Activated naive CD4-positive, alpha-beta T cell treated with anti-CD3 and anti-CD28 coated beads, Interleukin-2, amount 10 ng/mL, durations not matched to agents 7 days and 5 days (primary cell): ENCODE measurements at regions of chr22 and their contacts with region 1.

Region 1: DNA sequence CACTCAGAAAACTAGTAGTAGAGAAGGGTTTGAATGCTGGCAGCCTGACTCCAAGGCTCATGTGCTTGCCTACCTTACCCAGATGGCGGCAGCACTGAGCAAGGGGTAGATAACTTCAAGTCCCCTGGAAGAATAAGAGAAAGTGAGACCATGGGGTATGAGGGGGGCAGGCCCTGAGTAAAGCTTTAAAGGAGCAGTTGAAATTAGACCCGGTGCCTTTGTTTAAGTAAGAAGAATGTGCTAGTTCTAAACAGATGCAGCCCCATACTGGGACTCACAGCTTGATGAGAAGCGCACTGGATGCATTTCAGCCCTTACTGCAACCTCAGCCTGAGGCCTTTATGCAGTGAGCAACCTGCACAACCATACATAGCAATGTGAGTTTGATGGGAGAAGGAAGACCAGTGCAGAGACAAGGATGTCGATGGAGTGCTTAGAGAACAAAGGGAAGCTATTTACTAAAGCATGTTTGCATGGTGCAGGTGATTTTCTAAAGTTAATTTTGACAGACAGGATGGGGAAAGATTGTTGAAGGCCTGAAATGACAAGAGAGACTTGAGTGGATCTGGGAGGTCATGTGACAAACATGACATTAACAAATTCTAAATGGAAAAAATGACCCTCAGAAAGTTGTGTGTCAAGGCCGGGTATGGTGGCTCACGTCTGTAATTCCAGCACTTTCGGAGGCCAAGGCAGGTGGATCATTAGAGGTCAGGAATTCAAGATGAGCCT is 27.1 kb upstream of the TMA7B start:
- DNase-seq: peak; percentile 72
- H3K4me3 Mint-ChIP-seq: peak overlapping the region; percentile 68
- H3K27ac Mint-ChIP-seq: peak overlapping the region; percentile 89
- H3K4me1 Mint-ChIP-seq: peaks cover 56% of the 10 kb centered on the region
- H3K27me3 Mint-ChIP-seq: no peaks in the 10 kb centered on the region

Region 2: DNA sequence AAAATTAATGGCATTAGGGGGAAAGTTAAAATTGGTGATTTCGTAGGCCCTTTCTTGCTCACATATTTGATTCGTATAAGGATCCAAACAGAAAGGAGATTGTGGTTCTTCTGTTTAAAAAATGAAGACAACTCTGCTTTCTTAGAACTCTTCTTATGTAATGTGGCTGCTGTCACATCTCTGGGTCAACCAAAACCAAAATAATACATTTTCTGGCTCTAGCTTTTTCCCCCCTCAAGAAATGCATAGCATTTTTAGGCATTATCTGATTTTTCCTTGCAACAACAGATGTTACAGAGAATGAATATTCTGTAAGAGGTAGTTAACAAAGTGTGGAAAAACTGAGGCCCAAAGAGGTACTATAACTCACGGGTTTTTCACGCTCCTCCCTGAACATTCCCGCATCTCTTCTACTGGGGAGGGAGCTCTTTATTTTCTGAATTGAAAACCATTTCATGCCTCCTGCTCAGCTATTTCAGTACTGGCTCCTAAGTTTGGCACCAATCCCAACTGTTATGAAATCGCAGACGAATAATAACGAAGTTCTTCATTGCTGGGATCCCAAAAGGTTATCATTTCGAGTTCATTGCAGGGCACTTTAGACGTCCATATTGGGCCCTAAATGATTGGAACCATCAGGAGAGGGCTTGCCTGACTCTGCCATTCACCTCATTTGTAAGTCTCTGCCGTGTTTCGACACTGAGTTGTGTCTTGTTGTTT is 15.1 kb before region 1 on chr22:
- CTCF ChIA-PET with region 1: interaction called, 17 read pairs
- DNase-seq: no peak
- H3K4me3 Mint-ChIP-seq: peak overlapping the region; percentile 64
- H3K27ac Mint-ChIP-seq: peak overlapping the region; percentile 87
- H3K4me1 Mint-ChIP-seq: peaks cover 94% of the 10 kb centered on the region
- H3K27me3 Mint-ChIP-seq: no peaks in the 10 kb centered on the region

Region 3: GRCh38 chr22:39946503-39947219 is 13.6 kb after region 1 on chr22:
- CTCF ChIA-PET with region 1: interaction called, 11 read pairs
- DNase-seq: no peak
- H3K4me3 Mint-ChIP-seq: no peak overlapping the region
- H3K27ac Mint-ChIP-seq: peak overlapping the region; percentile 21
- H3K4me1 Mint-ChIP-seq: peaks cover 90% of the 10 kb centered on the region
- H3K27me3 Mint-ChIP-seq: no peaks in the 10 kb centered on the region

Region 4: GRCh38 chr22:40018051-40018450 is 85.0 kb after region 1 on chr22:
- CTCF ChIA-PET with region 1: no interaction called
- DNase-seq: no peak
- H3K4me3 Mint-ChIP-seq: no peak overlapping the region
- H3K27ac Mint-ChIP-seq: no peak overlapping the region
- H3K4me1 Mint-ChIP-seq: peaks cover 4% of the 10 kb centered on the region
- H3K27me3 Mint-ChIP-seq: peaks cover 10% of the 10 kb centered on the region